OCI-LY7 (cell line): ENCODE measurements at regions of chr2 and their contacts with region 1.

Region 1: GRCh38 chr2:197515739-197516392 is at the start of gene MOB4:
- DNase-seq: peak; percentile 96
- H3K4me3 ChIP-seq: peak within 1 kb of the TSS; percentile 89
- H3K27ac ChIP-seq: peak within 1 kb of the TSS; percentile 96
- H3K4me1 ChIP-seq: peaks cover 28% of the 10 kb centered on the region
- CTCF ChIP-seq: no peak
- total RNA-seq, gene MOB4: 23.0 and 27.6 TPM in 2 replicates

Region 2: GRCh38 chr2:197209742-197210408 is 306.0 kb before region 1 on chr2:
- CTCF ChIA-PET with region 1: no interaction called
- POLR2A ChIA-PET with region 1: no interaction called
- intact Hi-C with region 1: loop called (anchors 5 kb)
- DNase-seq: peak; percentile 78
- H3K4me3 ChIP-seq: peak overlapping the region; percentile 45
- H3K27ac ChIP-seq: peak overlapping the region; percentile 96
- H3K4me1 ChIP-seq: peaks cover 100% of the 10 kb centered on the region
- CTCF ChIP-seq: no peak

Region 3: DNA sequence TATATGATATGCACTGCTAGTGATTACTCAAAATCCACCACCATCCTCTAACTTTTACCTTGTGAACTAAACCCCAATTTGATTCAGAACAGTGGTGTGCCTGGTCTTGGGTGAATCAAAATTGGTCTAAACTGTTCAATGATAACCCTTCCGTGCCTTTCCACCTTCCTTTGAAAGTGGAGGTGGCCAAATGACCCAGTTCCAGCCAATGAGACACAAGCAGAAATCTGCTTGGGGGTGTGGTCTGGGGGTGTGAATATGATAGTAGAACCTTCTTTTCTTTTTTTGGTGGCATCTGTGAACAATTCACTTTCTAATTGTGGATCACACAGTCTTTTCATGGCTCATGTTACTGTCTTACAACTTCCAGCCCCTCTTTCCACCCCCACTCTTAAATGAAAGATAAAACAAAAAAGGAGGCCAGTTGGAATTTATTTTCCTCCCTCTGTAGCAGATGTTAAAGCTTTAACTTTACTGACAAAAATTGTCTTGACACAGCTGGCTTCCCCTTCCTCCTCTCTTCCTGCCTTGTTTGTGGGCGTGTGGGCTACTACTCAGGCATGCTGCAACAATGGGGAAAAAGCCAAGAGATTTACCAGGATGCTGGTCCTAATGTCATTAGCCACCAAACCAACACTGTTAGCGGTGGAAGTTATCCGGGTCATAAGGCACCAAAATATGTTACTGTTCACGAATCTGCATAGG is 146.5 kb before region 1 on chr2:
- CTCF ChIA-PET with region 1: no interaction called
- POLR2A ChIA-PET with region 1: no interaction called
- intact Hi-C with region 1: no loop called
- DNase-seq: no peak
- H3K4me3 ChIP-seq: no peak overlapping the region
- H3K27ac ChIP-seq: no peak overlapping the region
- H3K4me1 ChIP-seq: peaks cover 4% of the 10 kb centered on the region
- CTCF ChIP-seq: no peak

Region 4: DNA sequence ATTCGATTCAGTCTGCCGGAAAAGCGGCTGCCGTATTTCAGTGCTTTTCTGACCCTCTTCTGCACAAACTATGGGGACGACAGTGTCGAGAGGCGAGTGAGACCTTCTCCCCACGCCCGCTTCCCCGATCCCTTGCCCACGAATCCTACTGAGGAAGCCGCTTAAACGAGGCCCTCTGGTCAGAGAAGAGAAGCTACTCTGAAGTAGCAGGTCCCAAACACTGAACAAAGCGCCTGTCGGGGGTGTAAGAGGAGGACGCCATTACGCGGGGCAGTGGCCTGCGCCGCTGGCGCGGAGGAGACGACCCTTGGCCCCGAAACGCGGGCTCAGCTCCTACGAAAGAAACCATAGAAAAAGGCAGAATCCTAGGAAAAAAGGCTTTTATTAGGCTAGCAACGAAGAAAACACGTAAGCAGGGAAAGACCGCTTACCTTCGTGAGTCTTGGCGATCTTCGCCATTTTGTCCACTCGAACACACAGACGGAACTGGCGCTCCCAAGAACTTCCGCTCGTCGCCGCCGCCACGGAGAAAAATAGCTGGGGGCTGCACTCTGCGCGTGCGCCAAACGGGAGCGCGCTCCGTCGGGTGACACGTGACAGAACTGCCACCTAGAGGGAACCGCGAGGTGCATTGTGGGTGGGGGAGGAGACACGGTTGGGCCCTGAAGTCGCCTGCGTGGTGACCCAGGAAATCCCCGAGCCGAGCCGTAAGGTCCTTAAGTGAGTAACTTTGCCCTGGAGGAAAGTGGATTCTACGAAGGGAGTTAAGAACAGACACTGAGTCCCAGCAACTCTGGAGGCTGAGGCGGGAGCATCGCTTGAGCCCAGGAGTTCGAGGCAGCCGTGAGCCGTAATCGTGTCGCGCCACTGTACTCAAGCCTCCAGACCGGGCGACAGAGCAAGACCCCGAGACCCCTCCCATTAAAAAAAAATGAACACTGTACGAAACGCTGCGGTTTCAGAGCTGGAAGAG is 81.0 kb before region 1 on chr2 and contains the start of gene SF3B1:
- CTCF ChIA-PET with region 1: no interaction called
- POLR2A ChIA-PET with region 1: interaction called, 5 read pairs
- intact Hi-C with region 1: loop called (anchors 1 kb)
- DNase-seq: peak; percentile 99
- H3K4me3 ChIP-seq: peak within 1 kb of the TSS; percentile 99
- H3K27ac ChIP-seq: peak within 1 kb of the TSS; percentile 76
- H3K4me1 ChIP-seq: peaks cover 42% of the 10 kb centered on the region
- CTCF ChIP-seq: no peak
- total RNA-seq, gene SF3B1: 162 and 198 TPM in 2 replicates

Region 5: GRCh38 chr2:197453161-197453914 is 62.5 kb before region 1 on chr2 and contains the start of gene COQ10B:
- CTCF ChIA-PET with region 1: no interaction called
- POLR2A ChIA-PET with region 1: interaction called, 4 read pairs
- intact Hi-C with region 1: loop called (anchors 1 kb)
- DNase-seq: peak; percentile 100
- H3K4me3 ChIP-seq: peak within 1 kb of the TSS; percentile 84
- H3K27ac ChIP-seq: peak within 1 kb of the TSS; percentile 72
- H3K4me1 ChIP-seq: peaks cover 17% of the 10 kb centered on the region
- CTCF ChIP-seq: peak; percentile 55; the same call in 1 of the 2 replicates
- total RNA-seq, gene COQ10B: 4.5 and 5.0 TPM in 2 replicates

Region 6: DNA sequence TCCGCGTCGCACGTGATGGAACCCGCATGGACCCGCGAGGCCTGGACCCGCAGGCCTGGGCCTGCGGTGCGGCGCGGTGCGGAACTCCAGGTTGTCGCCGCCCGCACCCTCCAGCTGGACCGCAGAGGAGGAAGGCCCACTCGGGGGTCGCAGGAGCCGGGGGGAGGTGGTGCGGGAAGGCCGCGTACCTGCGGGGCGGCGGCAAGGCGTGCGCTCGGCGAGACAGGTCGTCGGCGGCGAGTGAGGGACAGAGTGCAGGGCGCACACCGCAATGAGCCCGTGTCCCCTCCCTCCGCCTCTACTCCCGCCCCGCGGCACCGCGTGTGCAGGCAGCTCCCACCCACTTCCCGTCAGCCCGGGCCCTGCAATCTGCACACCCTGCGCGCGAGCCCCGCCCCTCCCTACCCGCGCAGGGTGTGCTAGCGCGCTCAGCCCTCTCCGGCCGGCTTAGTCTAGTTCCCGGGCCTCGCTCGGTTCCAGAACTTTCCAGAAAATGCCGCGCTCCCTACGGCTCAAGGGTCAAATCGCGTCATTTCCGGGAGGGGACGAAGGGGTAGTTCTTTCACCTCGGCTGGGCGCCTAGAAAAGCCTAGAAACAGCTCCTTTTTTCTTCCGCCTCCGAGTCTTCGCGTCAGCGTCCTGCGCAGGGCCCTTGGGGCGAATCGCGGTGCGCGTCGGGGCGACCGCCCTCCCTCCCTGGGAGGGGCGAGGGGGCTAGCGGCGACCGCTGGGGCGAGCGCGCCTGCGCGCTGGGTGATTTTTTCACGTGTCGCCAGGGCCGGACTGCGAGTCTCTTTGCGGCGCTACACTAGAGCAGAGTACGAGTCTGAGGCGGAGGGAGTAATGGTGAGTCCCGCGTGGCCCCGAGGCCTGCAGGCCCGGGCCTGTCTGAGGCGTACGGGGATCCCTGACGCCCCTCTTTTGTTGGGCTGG is 16.0 kb before region 1 on chr2 and contains the starts of genes HSPD1 and HSPE1:
- CTCF ChIA-PET with region 1: interaction called, 3 read pairs
- POLR2A ChIA-PET with region 1: interaction called, 136 read pairs
- intact Hi-C with region 1: loop called (anchors 1 kb)
- DNase-seq: peak; percentile 99
- H3K4me3 ChIP-seq: peak within 1 kb of the TSS; percentile 83
- H3K27ac ChIP-seq: peak within 1 kb of the TSS; percentile 77
- H3K4me1 ChIP-seq: peaks cover 55% of the 10 kb centered on the region
- CTCF ChIP-seq: no peak
- total RNA-seq, gene HSPD1: 370 and 405 TPM in 2 replicates
- total RNA-seq, gene HSPE1: 189 and 314 TPM in 2 replicates